H1 (cell line): ENCODE measurements at regions of chr1 and their contacts with region 1.

Region 1: DNA sequence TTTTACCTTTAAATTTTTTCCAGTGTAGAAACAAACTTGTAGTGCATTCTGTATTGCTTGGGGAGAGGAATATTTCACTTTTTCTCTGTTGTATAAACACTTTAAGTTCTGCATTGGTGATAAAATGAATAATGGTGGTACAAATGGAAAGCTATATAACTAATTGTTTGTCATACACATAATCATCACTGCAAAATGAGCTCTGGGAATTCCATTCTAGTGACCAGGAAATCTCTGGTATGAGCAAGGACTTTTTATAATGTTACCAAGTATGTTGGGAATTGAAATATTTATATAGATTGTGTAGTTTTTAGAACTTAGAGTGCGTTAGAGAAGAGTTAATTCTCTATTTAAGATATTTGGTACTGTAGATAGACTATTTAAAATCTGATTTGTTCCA is 5.0 kb upstream of the FMN2 start:
- DNase-seq: no peak
- H3K4me3 ChIP-seq: no peak overlapping the region
- H3K27ac ChIP-seq: no peak overlapping the region
- H3K4me1 ChIP-seq: no peaks in the 10 kb centered on the region; a peak in 1 of 7 replicates
- H3K27me3 ChIP-seq: peaks cover 0 to 9% (median 0%) of the 10 kb centered on the region in 4 experiments; a peak in 3 of 7 replicates
- CTCF ChIP-seq: no peak
- EP300 ChIP-seq: no peak
- POLR2A ChIP-seq: no peak
- RAD21 ChIP-seq: no peak

Region 2: GRCh38 chr1:239979469-239979868 is 107.3 kb before region 1 on chr1:
- CTCF ChIA-PET with region 1: no interaction called
- POLR2A ChIA-PET with region 1: no interaction called
- DNase-seq: no peak
- H3K4me3 ChIP-seq: no peak overlapping the region
- H3K27ac ChIP-seq: no peak overlapping the region
- H3K4me1 ChIP-seq: no peaks in the 10 kb centered on the region
- H3K27me3 ChIP-seq: peaks cover 0 to 1% (median 0%) of the 10 kb centered on the region in 4 experiments; a peak in 1 of 7 replicates
- CTCF ChIP-seq: no peak
- EP300 ChIP-seq: no peak
- POLR2A ChIP-seq: no peak
- RAD21 ChIP-seq: no peak

Region 3: GRCh38 chr1:240073097-240073496 is 13.6 kb before region 1 on chr1:
- CTCF ChIA-PET with region 1: interaction called, 10 read pairs
- POLR2A ChIA-PET with region 1: interaction called, 3 read pairs
- DNase-seq: no peak
- H3K4me3 ChIP-seq: no peak overlapping the region
- H3K27ac ChIP-seq: no peak overlapping the region
- H3K4me1 ChIP-seq: peaks cover 0 to 8% (median 3%) of the 10 kb centered on the region in 4 experiments; a peak in 3 of 7 replicates
- H3K27me3 ChIP-seq: no peaks in the 10 kb centered on the region
- CTCF ChIP-seq: peak in 1 of 3 experiments; percentile 19; a peak in 1 of 4 replicates
- EP300 ChIP-seq: no peak
- POLR2A ChIP-seq: no peak
- RAD21 ChIP-seq: no peak